Ascending aorta (tissue), 2 donors: ENCODE measurements at regions of chr4 and their contacts with region 1.

Region 1: DNA sequence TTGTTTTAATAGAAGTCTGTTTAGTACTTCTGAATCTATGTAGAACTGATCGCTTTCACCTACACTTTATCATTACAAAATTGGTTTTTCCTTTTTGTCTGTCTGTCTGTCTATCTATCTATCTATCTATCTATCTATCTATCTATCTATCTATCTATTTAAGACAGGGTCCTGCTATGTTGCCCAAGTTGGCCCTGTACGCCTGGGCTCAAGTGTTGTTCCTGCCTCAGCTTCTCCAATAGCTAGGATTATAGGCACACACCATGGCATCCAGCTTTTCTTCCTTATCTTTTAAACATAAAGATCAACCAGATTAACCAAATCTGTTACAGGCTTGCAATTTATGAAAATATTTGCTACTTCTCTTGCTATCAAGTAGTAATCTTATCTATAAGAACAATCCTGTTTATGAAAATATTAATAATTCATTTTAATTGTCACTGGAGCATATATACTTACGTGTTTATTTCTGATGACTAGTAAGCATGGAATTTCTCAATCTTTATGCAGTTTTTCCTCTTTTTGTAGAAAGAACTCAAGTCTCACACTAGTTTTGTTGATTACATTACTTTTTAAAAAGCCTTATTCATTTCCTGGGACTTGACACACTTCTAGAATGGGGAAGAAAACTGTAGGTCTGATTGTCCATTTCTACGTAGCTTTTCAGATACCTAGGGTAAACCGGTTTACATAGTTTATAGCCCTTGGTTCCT is 24.6 kb downstream of the KIAA0232 start:
- DNase-seq: no peak
- H3K4me3 ChIP-seq: no peak overlapping the region
- H3K27ac ChIP-seq: peak overlapping the region; percentile 17 to 41
- H3K4me1 ChIP-seq: peaks cover 0 to 19% of the 10 kb centered on the region in 2 donors
- H3K27me3 ChIP-seq: no peaks in the 10 kb centered on the region
- CTCF ChIP-seq: no peak

Region 2: DNA sequence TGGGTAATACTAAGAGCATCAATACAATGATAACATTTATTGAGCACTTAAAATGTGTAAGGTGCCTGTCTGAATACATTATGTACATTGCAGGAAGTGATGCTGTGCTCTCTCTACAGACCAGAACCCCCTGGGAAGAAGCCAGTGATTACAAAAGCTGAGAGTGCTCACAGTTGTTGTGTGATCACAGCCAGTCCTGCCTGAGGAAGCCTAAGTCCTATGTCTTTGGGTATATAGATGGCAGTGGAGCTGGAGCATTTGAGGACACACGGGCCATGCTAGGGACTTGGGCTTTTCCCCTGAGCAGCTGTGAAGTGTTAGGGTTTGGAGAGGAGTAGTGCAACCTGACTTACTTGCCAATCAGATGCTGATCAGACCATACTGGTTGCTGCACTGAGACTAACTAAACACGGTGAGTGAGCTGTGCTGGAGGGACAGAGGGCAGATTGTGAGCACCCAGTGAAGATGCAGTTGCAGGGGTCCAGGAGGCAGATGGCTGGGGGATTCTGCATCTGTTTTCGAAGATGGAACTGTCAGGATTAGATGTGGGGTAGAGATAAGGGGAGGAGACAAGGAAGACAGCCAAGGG is 41.7 kb after region 1 on chr4:
- intact Hi-C with region 1: loop called (anchors 5 kb)
- DNase-seq: no peak
- H3K4me3 ChIP-seq: no peak overlapping the region
- H3K27ac ChIP-seq: no peak overlapping the region
- H3K4me1 ChIP-seq: no peaks in the 10 kb centered on the region
- H3K27me3 ChIP-seq: no peaks in the 10 kb centered on the region
- CTCF ChIP-seq: no peak

Region 3: DNA sequence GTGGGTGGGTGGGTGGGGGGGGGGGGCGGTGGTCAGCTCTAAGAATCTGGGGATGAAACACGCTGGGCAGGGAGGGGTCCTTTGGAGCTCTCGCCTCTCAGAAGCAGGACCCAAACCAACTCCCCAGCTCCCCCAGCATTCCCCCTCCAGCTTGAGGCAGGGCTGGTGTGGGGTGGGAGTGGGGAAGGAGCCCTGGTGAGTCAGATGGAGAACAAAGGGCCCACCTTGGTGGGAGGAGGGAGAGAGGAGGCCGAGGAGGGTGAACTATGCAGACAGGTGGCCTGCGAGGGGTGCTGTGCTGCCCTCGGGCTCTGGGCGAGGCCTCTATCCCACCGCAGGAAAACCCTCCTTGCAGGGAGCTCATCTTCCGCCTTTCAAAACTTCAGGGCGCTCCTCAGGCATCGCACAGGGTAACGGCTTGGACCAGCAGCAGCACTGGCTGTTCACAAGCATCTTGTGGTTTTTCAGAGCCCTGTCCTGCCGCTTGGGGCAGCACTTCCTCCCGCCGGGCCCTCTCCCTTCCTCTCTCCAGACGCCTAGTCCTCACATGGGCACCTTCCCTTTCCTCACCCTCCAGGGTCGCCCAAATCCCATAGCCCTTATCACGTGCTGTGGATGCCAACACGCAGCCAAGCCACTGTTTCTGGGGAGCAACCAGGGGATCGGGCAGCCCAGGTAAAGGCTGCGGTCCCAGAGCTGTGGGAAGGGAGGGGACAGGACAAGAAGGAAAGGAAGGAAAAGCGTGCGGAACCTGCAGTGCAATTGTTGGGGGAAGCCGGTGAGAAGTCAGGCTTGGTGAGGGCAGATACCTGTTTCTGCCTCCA is 294.8 kb after region 1 on chr4:
- intact Hi-C with region 1: no loop called
- DNase-seq: peak in 1 of 2 donors; percentile 83
- H3K4me3 ChIP-seq: peak overlapping the region; percentile 57 to 70
- H3K27ac ChIP-seq: peak overlapping the region; percentile 83 to 84
- H3K4me1 ChIP-seq: peaks cover 5 to 20% of the 10 kb centered on the region in 2 donors
- H3K27me3 ChIP-seq: no peaks in the 10 kb centered on the region
- CTCF ChIP-seq: peak; percentile 41 to 72 (median 69)